ENCODE measurements at regions of chr3 and their contacts with region 1.

Region 1: GRCh38 chr3:185727873-185728272 is 97.0 kb downstream of the IGF2BP2 start:
- DNase-seq: peak; percentile 90
- H3K27ac ChIP-seq: peak overlapping the region; percentile 97
- CTCF ChIP-seq: no peak

Region 2: GRCh38 chr3:185717121-185717520 is 10.8 kb before region 1 on chr3:
- CTCF ChIA-PET with region 1: no interaction called
- POLR2A ChIA-PET with region 1: interaction called, 20 read pairs
- DNase-seq: no peak
- H3K27ac ChIP-seq: peak overlapping the region; percentile 93
- CTCF ChIP-seq: no peak

Measured in RWPE1 (cell line).